ENCODE measurements at regions of chr6 and their contacts with region 1.

Region 1: DNA sequence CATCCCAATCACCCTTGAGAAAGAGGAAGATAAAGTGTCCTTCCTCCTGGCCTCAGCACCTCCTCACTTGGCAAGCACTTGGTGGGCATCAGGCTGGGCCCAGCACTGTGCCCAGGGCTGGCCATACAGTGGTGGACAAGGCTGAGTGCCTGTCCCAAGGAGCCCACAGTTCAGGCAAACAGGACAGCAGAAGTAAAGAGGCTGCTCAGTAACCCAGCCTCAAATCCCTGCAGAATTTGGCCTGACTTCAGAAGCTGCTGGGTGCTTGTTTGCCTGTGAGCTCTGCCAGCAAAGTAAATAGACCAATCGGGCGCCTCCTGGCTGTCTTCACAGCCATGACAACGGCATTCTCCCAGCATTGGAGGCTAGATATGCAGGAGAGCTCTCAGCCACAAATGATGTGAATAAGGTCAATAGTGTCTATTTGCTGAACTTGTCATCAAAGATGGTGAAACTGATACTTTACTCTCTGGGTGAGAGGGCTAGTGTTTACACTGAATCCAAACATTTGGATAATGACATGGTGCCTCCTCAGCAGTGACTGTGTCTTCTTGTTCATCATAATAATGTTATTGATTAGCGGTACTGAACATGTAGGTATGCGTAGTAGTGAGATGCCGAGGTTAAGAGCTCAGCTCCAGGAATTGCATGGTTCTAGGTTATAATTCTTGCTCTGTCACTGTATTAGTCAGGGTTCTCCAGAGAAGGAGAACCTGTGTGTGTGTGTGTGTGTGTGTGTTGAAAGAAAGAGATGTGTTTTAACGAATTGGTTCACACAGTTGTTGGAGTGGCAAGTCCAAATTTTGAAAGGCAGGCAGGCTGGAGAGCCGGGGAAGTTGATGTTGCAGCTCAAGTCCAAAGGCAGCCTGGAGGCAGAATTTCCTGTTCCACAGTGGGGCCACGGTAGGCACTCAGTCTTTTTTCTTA is 36.8 kb upstream of the FANCE start:
- DNase-seq: peak; percentile 69
- H3K4me3 ChIP-seq: no peak overlapping the region
- CTCF ChIP-seq: peak; percentile 68

Region 2: GRCh38 chr6:35371494-35372262 is 43.6 kb before region 1 on chr6:
- CTCF ChIA-PET with region 1: interaction called, 10 read pairs
- POLR2A ChIA-PET with region 1: no interaction called
- DNase-seq: no peak
- H3K4me3 ChIP-seq: no peak overlapping the region
- CTCF ChIP-seq: no peak

Region 3: GRCh38 chr6:35391240-35391968 is 23.9 kb before region 1 on chr6:
- CTCF ChIA-PET with region 1: interaction called, 15 read pairs
- POLR2A ChIA-PET with region 1: no interaction called
- DNase-seq: peak; percentile 91
- H3K4me3 ChIP-seq: no peak overlapping the region
- CTCF ChIP-seq: peak; percentile 4

Region 4: DNA sequence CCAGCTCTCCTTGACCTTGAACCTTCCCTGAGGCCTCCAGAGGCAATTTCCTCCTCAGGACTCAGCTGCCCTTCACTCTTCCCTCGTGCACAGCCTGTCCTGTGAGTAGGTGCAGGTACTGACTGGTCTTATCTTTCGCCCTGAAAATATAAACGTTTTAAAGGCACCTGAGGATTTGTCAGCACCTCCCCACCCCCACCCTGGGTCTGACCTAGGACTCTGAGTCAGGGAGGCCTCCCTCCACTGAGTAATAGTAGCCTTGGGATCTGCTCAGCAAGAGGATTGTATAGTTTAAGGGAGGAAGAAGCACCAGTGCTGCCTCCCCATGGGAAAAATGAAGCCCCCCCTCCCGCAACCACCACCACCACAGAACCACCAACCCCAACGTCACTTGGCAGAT is 18.3 kb before region 1 on chr6:
- CTCF ChIA-PET with region 1: interaction called, 15 read pairs
- POLR2A ChIA-PET with region 1: no interaction called
- DNase-seq: no peak
- H3K4me3 ChIP-seq: no peak overlapping the region
- CTCF ChIP-seq: no peak

Region 5: GRCh38 chr6:35402136-35402855 is 13.0 kb before region 1 on chr6:
- CTCF ChIA-PET with region 1: interaction called, 93 read pairs
- POLR2A ChIA-PET with region 1: no interaction called
- DNase-seq: no peak
- H3K4me3 ChIP-seq: no peak overlapping the region
- CTCF ChIP-seq: no peak

Region 6: GRCh38 chr6:35435074-35435837 is 19.9 kb after region 1 on chr6:
- CTCF ChIA-PET with region 1: interaction called, 53 read pairs
- POLR2A ChIA-PET with region 1: no interaction called
- DNase-seq: no peak
- H3K4me3 ChIP-seq: no peak overlapping the region
- CTCF ChIP-seq: no peak

Measured in AG04449 (cell line).